Posterior cingulate gyrus (tissue), 11 donors: ENCODE measurements at regions of chr6 and their contacts with region 1.

Region 1: DNA sequence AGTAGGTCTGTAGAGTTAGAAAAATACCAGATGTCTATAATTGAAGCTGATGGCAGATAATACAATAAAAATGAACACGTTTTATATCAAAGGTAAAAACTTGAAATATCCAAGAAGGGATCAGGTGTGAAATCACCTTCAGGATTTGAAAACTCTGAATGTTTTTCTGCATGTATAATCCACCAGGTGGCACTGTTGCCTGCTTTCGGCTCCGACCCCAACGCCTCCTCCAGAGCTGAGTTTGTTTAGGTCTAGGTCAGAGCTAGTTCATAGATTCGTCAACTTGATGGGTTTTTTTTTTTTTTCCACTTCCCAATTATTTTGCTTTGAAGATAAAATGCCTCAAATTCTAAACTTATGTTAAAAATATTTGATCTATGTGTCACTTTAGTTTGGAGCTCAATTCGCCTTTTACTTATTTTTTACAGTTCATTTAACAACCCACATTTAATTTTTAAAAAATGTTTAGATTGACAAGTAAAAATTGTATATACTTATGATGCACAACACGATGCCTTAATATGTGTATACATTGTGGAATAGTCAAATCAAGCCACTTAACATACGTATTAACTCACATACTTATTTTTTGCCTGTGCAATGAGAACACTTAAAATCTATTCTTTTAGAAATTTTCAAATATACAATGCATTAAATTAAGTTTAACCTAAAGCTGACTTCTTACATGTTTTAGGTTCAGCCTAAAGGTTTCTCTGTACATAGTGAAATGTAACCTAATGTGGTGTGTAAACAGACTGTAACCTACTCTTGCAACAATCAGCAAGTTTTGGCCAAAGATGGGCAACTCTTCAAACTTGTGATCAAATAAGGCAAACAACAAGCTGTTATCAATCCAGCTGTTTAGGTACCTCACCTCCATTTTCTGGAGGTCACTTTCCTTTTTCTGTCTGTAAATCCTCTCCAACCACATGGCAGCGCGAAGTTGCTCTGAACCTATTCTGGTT is 39.4 kb upstream of the ENPP4 start:
- DNase-seq: peak; percentile 38 to 93 (median 68)

Region 2: GRCh38 chr6:46207174-46207573 is 116.8 kb after region 1 on chr6:
- intact Hi-C with region 1: loop called (anchors 5 kb)
- DNase-seq: no peak

Region 3: GRCh38 chr6:46221222-46221793 is 130.9 kb after region 1 on chr6:
- intact Hi-C with region 1: loop called (anchors 5 kb)
- DNase-seq: no peak

Region 4: DNA sequence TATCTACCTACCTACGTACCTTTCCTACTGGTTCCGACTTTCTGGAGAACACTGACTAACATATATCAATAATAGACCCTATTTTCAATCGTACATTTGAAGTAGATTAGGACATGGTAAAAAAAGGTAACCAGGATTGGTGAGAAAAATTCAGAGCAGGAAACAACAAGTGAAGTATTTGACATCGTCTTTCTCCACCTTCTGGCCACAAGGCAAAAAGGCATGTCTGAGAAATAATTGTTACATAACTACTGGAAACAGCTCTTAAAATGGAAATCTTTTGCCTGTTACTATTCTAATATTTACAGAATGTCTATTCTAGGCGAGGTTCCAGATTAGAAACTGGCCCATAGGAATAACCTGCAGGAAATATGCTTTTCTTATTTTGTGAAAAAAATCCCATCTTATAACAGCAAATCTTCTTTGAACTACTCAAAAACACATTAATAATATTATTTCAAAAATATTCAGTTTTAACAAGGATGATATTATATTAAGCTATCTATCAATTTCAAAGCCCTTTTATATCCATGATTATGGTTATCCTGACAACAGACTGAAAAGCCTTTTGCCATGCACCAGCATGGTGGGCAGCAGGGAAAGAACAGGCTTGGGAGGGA is 320.0 kb after region 1 on chr6:
- intact Hi-C with region 1: loop called (anchors 5 kb)
- DNase-seq: no peak